ENCODE measurements at regions of chr22 and their contacts with region 1.

Region 1: DNA sequence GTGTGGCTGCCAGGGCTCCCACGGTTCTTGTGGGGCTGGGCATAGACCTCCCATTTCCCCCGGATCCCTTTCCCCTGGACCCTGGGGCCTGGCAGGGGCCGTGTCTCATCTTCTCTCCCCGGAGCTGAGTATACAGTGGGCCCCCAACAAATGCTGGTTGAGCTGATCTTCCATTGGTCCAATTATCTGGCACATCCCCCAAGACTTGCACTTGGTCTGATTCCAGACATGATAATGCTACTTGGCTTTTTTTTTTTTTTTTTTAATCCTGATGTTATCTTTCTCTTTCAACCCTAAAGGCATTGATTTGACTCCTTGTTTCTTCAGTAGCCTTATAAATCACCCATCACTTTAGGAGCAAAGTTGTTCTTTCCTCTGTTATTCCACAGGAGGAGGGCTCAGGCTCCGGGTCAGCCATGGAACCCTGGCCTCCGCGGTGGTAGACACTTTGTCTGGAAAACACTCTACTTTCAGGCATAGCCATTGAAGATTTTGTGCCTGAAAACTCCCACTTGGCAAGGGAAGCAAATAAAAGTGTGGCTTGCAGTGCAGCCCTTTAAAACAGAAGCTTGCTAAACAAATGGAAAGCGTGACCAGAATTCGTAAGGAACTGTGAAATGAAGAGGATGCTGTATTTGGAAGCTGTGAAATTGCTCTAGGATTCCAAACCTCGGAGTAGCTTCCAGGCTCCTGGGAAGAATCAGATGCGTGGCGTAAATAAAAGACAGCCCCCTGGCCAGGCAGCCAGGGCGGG is 44.8 kb downstream of the ARHGAP8 start:
- DNase-seq: no peak
- H3K4me3 ChIP-seq: no peak overlapping the region
- H3K27ac ChIP-seq: no peak overlapping the region
- H3K4me1 ChIP-seq: no peaks in the 10 kb centered on the region
- H3K27me3 ChIP-seq: no peaks in the 10 kb centered on the region
- CTCF ChIP-seq: no peak

Region 2: GRCh38 chr22:44776605-44777337 is 20.4 kb before region 1 on chr22:
- CTCF ChIA-PET with region 1: interaction called, 20 read pairs
- dilution Hi-C with region 1: no loop called
- in situ Hi-C with region 1: no loop called
- intact Hi-C with region 1: no loop called
- DNase-seq: no peak
- H3K4me3 ChIP-seq: no peak overlapping the region
- H3K27ac ChIP-seq: no peak overlapping the region
- H3K4me1 ChIP-seq: no peaks in the 10 kb centered on the region
- H3K27me3 ChIP-seq: no peaks in the 10 kb centered on the region
- CTCF ChIP-seq: no peak

Region 3: GRCh38 chr22:44931077-44931540 is 134.0 kb after region 1 on chr22:
- CTCF ChIA-PET with region 1: no interaction called
- dilution Hi-C with region 1: loop called (anchors 10 kb)
- in situ Hi-C with region 1: no loop called
- intact Hi-C with region 1: no loop called
- DNase-seq: no peak
- H3K4me3 ChIP-seq: no peak overlapping the region
- H3K27ac ChIP-seq: no peak overlapping the region
- H3K4me1 ChIP-seq: no peaks in the 10 kb centered on the region
- H3K27me3 ChIP-seq: no peaks in the 10 kb centered on the region
- CTCF ChIP-seq: no peak

Measured in mammary epithelial cell (primary cell).